ENCODE measurements at regions of chr6 and their contacts with region 1.

Region 1: DNA sequence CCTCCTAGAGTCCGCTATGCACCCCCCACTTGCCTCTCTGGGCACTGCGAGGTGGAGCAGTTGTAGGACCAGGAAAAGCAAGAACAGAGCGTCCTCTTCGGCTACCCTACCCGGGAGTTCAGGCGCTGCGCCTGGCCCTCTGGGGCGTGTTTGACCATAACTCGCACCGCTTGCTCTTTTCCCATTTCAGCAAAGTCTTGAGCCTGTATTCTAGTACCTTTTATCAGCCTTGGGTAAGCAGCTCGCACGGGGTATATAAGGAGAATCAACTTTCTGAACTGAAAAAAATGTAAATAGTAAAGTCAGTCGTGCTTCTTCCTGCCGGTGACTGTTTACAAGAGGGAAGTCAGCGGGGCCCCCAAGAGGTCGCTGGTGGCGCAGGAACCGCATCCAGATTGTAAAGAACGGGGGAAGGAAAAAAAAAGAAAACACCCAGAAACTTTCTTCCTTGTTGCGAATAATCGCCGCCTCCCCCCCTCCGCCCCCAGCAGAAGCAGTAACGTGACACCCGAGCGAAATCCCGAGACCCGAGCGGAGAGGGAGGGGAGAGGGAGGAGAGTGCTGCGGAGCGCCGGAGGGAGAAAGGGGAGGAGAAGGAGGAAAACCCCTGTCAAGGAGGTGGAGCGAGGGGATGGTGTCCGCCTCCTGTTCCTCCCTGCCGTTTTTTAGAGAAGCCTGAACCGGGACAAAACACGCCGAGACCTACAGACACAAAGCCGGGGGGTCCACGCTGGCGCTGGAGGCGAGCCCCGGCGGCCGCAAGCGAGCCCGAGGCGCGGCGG is at the start of gene UST:
- DNase-seq: peak; percentile 88
- H3K4me3 ChIP-seq: peak within 1 kb of the TSS; percentile 60 to 93 (median 74)
- H3K27ac ChIP-seq: peak within 1 kb of the TSS; percentile 20
- H3K4me1 ChIP-seq: peaks cover 16% of the 10 kb centered on the region
- H3K27me3 ChIP-seq: no peaks in the 10 kb centered on the region
- CTCF ChIP-seq: peak; percentile 46 to 66
- total RNA-seq, gene UST: 13.0 to 22.2 TPM

Region 2: GRCh38 chr6:148700741-148701311 is 45.7 kb before region 1 on chr6:
- CTCF ChIA-PET with region 1: no interaction called
- dilution Hi-C with region 1: no loop called
- in situ Hi-C with region 1: no loop called
- intact Hi-C with region 1: no loop called
- DNase-seq: peak; percentile 21
- H3K4me3 ChIP-seq: peak overlapping the region; percentile 35 to 44 (median 38)
- H3K27ac ChIP-seq: no peak overlapping the region
- H3K4me1 ChIP-seq: peaks cover 8% of the 10 kb centered on the region
- H3K27me3 ChIP-seq: no peaks in the 10 kb centered on the region
- CTCF ChIP-seq: no peak

Region 3: GRCh38 chr6:148818939-148819583 is 72.5 kb after region 1 on chr6:
- CTCF ChIA-PET with region 1: no interaction called
- dilution Hi-C with region 1: no loop called
- in situ Hi-C with region 1: no loop called
- intact Hi-C with region 1: loop called (anchors 5 kb)
- DNase-seq: peak; percentile 55
- H3K4me3 ChIP-seq: no peak overlapping the region
- H3K27ac ChIP-seq: no peak overlapping the region
- H3K4me1 ChIP-seq: peaks cover 3% of the 10 kb centered on the region
- H3K27me3 ChIP-seq: no peaks in the 10 kb centered on the region
- CTCF ChIP-seq: no peak

Region 4: DNA sequence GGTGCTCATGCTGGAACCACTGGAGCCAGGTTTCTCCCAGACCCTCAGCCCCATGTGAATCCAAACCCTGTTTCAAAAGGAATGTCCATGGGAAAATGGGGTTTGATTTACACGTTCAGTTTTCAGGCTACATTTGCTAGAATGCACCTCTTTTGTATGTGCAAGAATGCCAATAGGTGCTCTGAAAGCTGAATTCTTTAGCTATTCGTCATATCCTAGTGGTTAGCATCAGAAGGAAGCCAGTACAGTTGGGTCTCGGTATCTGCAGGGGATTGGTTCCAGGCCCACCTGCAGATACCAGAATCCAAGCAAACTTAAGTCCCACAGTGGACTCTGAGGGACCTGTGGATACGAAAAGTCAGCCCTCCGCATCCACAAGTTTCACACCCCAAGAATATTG is 93.7 kb after region 1 on chr6:
- CTCF ChIA-PET with region 1: interaction called, 15 read pairs
- dilution Hi-C with region 1: no loop called
- in situ Hi-C with region 1: no loop called
- intact Hi-C with region 1: no loop called
- DNase-seq: peak; percentile 35
- H3K4me3 ChIP-seq: no peak overlapping the region
- H3K27ac ChIP-seq: no peak overlapping the region
- H3K4me1 ChIP-seq: peaks cover 18% of the 10 kb centered on the region
- H3K27me3 ChIP-seq: no peaks in the 10 kb centered on the region
- CTCF ChIP-seq: no peak

Region 5: DNA sequence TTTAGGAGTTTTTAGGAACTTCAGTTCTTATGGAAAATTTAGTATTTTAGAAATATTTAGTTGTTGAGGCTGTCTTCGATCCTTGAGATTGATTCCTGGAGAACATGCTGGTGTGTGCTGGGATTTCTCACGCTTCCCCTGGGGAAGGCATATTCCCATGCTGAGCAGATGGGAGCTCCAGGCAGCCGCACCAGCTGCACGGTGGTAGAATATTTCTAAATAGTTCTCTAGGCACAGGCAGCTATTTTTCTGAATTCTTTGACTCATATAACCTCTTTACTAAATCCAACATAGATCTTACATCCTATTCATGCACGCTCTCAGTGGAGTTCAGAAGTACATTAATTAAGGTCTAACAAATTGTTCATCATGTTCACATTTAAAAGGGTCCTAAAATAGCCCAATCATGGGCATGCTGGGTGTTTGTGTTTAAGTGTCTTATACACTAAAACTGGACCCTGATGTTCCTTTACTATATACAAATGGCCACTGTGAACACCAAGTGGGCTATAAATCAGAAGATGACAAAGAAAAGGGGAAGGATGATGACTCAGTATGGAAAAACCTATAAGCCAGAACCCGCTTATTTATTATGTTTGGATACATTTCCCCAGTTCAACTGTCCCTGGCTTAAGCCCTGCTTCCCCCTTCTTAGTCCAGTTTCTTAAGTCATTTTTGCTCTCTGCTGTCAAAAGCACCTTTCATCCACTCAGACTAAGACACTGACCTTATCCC is 138.7 kb after region 1 on chr6:
- CTCF ChIA-PET with region 1: no interaction called
- dilution Hi-C with region 1: no loop called
- in situ Hi-C with region 1: no loop called
- intact Hi-C with region 1: loop called (anchors 5 kb)
- DNase-seq: peak; percentile 60
- H3K4me3 ChIP-seq: peak overlapping the region in 1 of 3 experiments; percentile 9
- H3K27ac ChIP-seq: peak overlapping the region; percentile 69
- H3K4me1 ChIP-seq: peaks cover 32% of the 10 kb centered on the region
- H3K27me3 ChIP-seq: no peaks in the 10 kb centered on the region
- CTCF ChIP-seq: no peak

Region 6: GRCh38 chr6:149012040-149012545 is 265.5 kb after region 1 on chr6:
- CTCF ChIA-PET with region 1: no interaction called
- dilution Hi-C with region 1: no loop called
- in situ Hi-C with region 1: no loop called
- intact Hi-C with region 1: loop called (anchors 5 kb)
- DNase-seq: peak; percentile 90
- H3K4me3 ChIP-seq: no peak overlapping the region
- H3K27ac ChIP-seq: no peak overlapping the region
- H3K4me1 ChIP-seq: peaks cover 9% of the 10 kb centered on the region
- H3K27me3 ChIP-seq: no peaks in the 10 kb centered on the region
- CTCF ChIP-seq: no peak

Region 7: DNA sequence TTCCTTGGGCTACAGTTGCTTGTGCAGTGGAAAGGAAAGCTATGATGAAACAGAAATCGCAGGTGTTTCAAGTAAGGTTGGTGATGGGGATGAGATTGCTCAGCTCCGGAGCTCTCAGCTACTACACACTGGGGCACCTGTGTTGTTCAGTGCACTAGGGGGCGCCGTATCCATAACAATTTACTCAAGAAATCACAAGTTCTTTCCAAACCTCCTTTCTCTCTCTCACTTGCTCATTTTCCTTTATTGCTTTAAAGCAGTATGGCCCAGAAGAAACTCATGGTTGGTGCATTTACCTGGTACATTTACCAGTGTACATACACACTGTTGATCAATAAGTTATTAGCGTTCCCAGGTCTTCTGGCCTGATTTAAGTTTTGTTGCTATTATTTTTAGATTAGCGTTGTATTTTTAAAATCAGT is 335.7 kb after region 1 on chr6:
- CTCF ChIA-PET with region 1: no interaction called
- dilution Hi-C with region 1: no loop called
- in situ Hi-C with region 1: no loop called
- intact Hi-C with region 1: loop called (anchors 5 kb)
- DNase-seq: peak; percentile 52
- H3K4me3 ChIP-seq: no peak overlapping the region
- H3K27ac ChIP-seq: no peak overlapping the region
- H3K4me1 ChIP-seq: peaks cover 15% of the 10 kb centered on the region
- H3K27me3 ChIP-seq: no peaks in the 10 kb centered on the region
- CTCF ChIP-seq: peak; percentile 79 to 81

Measured in mammary epithelial cell (primary cell).